ENCODE measurements at regions of chr17 and their contacts with region 1.

Region 1: DNA sequence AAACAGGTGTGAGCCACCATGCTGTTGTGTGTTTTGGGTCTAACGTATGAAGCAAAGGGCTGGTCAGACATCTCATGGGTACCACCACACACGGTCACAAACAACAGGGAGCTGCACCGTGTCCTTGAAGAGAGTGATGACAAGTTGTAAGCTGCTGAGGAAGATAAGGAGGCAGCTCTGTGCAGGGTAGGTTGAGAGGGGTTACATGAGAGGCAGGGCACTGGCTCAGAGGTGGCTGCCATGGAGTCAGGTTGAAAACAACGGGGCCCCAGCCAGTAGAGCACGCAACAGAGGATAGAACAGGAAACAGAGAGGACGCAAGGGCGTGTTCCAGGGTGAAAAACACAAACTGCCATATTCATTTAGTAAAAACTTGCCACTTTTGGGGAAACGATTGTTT is 52.2 kb downstream of the TRARG1 start:
- DNase-seq: peak in 1 of 3 donors; percentile 62
- ATAC-seq: peak; percentile 79 to 94
- H3K4me3 ChIP-seq: no peak overlapping the region
- H3K27ac ChIP-seq: no peak overlapping the region
- H3K4me1 ChIP-seq: no peaks in the 10 kb centered on the region
- H3K27me3 ChIP-seq: no peaks in the 10 kb centered on the region

Region 2: DNA sequence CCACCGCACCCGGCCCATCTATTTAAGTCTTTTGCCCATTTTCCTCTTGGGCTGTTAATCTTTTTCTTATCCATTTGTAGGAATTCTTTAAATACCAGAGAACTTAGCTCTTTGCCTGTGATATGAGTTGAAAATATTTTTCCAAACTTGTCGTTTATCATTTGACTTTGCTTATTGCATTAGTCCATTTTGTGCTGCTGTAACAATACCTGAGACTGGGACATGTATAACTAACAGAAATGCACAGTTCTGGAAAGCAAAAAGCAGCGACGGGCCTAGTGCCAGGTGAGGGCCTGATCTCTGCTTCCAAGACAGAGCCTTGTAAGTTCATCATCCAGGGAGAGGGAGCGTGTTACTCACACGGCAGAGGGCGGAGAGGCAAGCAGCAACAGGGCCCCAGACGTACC is 87.1 kb before region 1 on chr17:
- intact Hi-C with region 1: no loop called
- DNase-seq: no peak
- ATAC-seq: no peak
- H3K4me3 ChIP-seq: no peak overlapping the region
- H3K27ac ChIP-seq: no peak overlapping the region
- H3K4me1 ChIP-seq: no peaks in the 10 kb centered on the region
- H3K27me3 ChIP-seq: no peaks in the 10 kb centered on the region

Region 3: GRCh38 chr17:1256699-1257098 is 75.0 kb before region 1 on chr17:
- intact Hi-C with region 1: loop called in 1 of 4 experiments (anchors 5 kb)
- DNase-seq: peak in 2 of 3 donors; percentile 52 to 55
- ATAC-seq: peak in 1 of 2 donors; percentile 35
- H3K4me3 ChIP-seq: no peak overlapping the region
- H3K27ac ChIP-seq: no peak overlapping the region
- H3K4me1 ChIP-seq: peaks cover 3% of the 10 kb centered on the region
- H3K27me3 ChIP-seq: no peaks in the 10 kb centered on the region

Region 4: GRCh38 chr17:1275962-1276736 is 55.6 kb before region 1 on chr17:
- intact Hi-C with region 1: loop called (anchors 5 to 10 kb)
- DNase-seq: peak; percentile 64 to 88 (median 84)
- ATAC-seq: peak; percentile 65 to 72
- H3K4me3 ChIP-seq: no peak overlapping the region
- H3K27ac ChIP-seq: no peak overlapping the region
- H3K4me1 ChIP-seq: no peaks in the 10 kb centered on the region
- H3K27me3 ChIP-seq: no peaks in the 10 kb centered on the region

Measured in right cardiac atrium (tissue), 5 donors.